Heart left ventricle (tissue), 16 donors: ENCODE measurements at regions of chr14 and their contacts with region 1.

Region 1: DNA sequence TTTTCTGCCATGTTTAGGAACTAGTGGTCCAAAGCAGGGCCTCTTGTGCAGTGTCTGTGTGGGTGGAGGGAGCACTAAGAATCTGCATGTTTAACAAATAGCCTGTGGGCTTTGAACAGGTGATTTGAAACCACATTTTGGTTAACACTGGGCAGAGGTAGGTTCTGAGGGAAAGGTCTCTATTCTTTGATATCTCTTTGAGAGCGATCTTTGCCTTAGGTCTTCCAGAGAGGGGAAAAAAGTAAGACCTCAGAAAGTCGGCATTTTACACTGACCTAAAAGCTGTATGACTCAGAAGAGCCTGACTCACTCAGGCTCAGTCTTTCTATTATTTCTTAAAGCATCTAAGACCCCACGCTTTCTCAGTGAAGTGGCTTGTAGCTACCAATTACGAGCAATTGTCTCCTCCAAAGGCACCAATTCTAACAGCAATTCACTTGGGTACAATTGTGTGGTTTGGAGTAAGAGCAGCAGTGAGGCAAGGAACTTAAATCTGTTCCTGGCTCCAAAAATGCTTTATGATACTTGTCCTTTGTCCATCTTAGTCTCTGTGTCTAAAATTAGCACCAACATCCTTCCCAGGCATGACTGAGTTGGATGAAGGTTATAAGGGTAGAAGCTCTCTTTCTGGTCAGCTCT is 8.8 kb downstream of the EIF2B2 start:
- DNase-seq: no peak
- ATAC-seq: peak in 3 of 4 donors; percentile 65 to 72 (median 67)
- H3K4me3 ChIP-seq: no peak overlapping the region
- H3K27ac ChIP-seq: peak overlapping the region in 11 of 12 donors; percentile 20 to 78 (median 66)
- H3K4me1 ChIP-seq: peaks cover 7 to 37% (median 27%) of the 10 kb centered on the region in 12 donors
- H3K27me3 ChIP-seq: no peaks in the 10 kb centered on the region
- CTCF ChIP-seq: no peak
- POLR2A ChIP-seq: no peak

Region 2: DNA sequence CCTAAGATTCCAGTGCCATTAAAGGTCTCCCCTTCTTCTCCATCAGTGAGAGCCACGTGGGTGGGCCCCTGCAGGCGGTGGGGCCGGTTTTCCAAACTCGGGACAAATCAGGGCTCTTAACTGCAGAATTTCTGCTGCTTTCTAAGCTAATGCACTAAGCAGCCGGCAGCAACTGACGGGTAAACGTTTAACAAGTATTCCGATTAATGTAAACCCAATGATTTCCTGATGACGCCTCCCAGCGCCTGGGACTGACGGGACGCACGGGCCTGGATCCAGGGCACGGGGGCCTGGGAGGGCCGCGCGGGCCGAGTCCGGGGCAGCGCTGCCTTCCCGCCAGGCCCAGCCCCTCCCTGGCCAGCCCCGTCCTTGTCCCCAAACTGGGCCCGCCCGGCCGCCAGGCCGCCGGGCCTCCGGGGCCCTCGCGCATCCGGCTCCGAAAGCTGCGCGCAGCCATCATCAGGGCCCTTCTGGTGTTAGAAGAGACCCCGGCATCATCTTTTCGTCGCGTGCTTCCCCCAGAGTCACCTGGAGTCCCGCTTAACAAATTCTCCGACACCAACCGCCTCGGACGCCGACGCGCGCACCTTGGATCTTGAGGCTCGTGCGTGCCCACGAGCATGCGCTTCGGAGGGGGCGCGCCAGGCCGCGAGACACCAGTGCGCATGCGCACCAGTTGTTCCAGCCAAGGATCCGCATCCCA is 39.5 kb after region 1 on chr14 and contains the start of gene MLH3:
- intact Hi-C with region 1: loop called in 1 of 10 experiments (anchors 5 kb)
- DNase-seq: peak; percentile 84 to 93 (median 89)
- ATAC-seq: peak; percentile 71 to 95 (median 92)
- H3K4me3 ChIP-seq: peak within 1 kb of the TSS; percentile 48 to 80 (median 62)
- H3K27ac ChIP-seq: peak within 1 kb of the TSS; percentile 67 to 93 (median 90)
- H3K4me1 ChIP-seq: peaks cover 0 to 39% (median 15%) of the 10 kb centered on the region in 12 donors
- H3K27me3 ChIP-seq: no peaks in the 10 kb centered on the region
- CTCF ChIP-seq: peak in 2 of 12 donors; percentile 12
- POLR2A ChIP-seq: peak in 1 of 2 donors; percentile 67
- total RNA-seq, gene MLH3: 11.6 to 23.9 (median 15.3) TPM